Activated CD4-positive, alpha-beta T cell treated with anti-CD3 and anti-CD28 coated beads, Interleukin-2, amount 10 ng/mL, durations not matched to agents 24 days and 14 days (primary cell): ENCODE measurements at regions of chr3 and their contacts with region 1.

Region 1: DNA sequence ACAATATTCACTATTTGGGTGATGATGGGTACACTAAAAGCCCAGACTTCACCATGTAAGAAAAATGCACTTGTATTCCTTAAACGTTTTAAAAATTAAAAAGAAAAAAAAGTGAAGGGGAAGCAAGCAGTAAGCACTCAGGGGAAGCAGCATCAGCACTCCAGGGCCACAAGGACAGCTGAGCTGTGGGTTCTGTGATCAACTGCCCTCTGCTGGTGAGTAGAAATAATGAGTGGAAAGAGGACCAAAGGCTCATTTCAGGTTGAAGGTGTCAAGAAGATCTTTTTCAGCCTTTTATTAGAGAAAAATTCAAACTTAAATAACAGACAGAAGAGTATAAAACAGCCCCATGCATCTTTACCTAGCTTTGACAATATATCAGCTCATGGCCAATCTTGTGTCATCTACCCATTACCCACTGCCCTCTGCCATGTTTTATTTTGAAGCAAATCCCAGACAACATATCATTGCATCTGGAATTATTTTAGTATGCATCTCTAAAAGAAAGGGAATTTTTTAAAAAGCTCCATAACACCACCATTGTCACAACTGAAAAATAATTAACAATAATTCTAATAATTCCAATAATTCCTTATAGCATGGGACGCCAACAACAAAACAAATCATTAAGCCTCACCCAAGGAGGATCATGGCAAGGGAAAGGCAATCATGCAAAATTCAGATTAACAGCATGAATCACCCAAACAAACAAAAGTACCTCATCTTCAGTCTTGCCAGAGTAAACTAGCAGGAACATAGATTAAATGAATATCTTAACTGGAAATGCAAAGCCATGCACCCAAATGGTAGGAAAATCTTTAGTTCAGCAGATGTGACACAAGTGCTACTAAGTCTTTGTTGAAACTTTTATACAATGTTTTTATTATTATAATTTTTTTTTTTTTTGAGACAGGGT is 42.5 kb downstream of the TAMM41 start:
- DNase-seq: peak; percentile 82
- H3K4me3 Mint-ChIP-seq: no peak overlapping the region
- H3K27ac Mint-ChIP-seq: no peak overlapping the region
- H3K4me1 Mint-ChIP-seq: peaks cover 8% of the 10 kb centered on the region
- H3K27me3 Mint-ChIP-seq: no peaks in the 10 kb centered on the region

Region 2: DNA sequence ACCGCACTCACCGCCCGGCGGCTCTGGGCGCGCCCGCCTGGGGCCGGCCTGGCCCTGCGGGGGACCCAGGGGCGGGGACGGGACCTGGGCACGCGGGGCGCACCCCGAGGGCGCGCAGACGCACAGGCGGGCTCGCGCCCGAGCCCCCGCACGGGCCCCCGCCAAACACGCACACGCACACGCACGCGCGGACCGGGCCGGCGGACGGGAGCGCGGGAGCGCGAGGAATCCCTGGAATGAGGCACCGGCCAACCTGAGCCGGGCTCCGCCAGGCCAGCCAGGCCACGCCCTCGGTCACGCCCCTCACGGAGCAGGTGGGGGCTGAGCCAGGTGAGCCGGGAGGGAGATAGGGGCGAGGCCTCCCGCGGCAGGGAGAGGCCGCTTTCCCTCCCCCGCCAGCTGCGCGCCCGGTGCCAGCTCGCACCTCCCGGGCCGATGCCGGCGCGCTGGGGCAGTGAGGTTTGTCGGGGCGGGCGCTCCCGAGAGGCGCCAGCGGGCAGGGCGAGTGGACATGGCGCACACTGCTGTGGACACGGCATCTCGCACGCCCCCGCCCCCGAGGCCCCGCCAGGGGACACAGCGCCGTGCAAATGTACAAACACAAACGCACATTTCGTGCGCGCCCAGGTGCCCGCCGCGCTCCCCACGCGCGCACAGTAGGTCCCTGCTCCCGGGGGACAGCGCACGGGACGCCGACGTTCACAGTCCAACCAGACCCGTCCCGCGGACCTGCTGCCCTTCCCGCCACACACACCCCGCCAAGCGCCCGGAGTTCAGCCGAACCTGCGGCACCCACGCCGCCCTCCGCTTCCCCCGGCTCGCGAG is 84.6 kb before region 1 on chr3:
- intact Hi-C with region 1: loop called (anchors 10 kb)
- DNase-seq: peak; percentile 87
- H3K4me3 Mint-ChIP-seq: peak overlapping the region; percentile 93
- H3K27ac Mint-ChIP-seq: peak overlapping the region; percentile 37
- H3K4me1 Mint-ChIP-seq: peaks cover 20% of the 10 kb centered on the region
- H3K27me3 Mint-ChIP-seq: peaks cover 29% of the 10 kb centered on the region